ENCODE measurements at regions of chr20 and their contacts with region 1.

Region 1: DNA sequence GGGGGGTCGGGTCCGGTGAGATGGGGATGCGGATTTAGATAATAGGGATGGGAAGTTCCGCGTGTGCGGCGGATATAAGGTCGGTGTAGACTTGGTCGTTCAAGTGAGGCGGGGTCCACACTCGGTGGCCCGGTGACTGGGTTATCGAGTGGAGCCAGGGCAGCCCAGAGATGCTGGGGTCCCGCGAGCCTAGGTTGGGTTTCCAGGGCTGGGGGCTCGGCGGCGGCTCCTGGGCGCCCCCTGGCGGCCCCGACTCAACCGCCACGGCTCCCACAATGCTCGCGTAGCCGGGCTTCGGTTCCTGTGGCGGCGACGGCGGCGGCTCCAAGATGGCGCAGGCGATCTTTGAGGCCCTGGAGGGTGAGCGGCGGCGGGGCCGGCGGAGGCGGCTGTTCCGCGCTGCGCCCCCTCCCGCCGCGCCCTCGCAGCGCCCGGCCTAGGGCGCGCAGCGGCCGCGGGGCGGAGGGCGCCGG is at the start of gene ZNF341:
- DNase-seq: peak in 1 of 2 experiments; percentile 69
- H3K4me3 ChIP-seq: peak within 1 kb of the TSS; percentile 64
- H3K27ac ChIP-seq: peak within 1 kb of the TSS; percentile 94
- H3K4me1 ChIP-seq: peaks cover 59% of the 10 kb centered on the region
- H3K27me3 ChIP-seq: no peaks in the 10 kb centered on the region
- CTCF ChIP-seq: peak; percentile 83
- total RNA-seq, gene ZNF341: 5.2 and 5.6 TPM in 2 replicates

Region 2: GRCh38 chr20:33489495-33490022 is 242.2 kb before region 1 on chr20:
- CTCF ChIA-PET with region 1: no interaction called
- POLR2A ChIA-PET with region 1: interaction called, 12 read pairs
- intact Hi-C with region 1: no loop called
- DNase-seq: peak; percentile 91 to 100
- H3K4me3 ChIP-seq: peak overlapping the region; percentile 55; the same call in 1 of the 2 replicates
- H3K27ac ChIP-seq: peak overlapping the region; percentile 90
- H3K4me1 ChIP-seq: peaks cover 18% of the 10 kb centered on the region
- H3K27me3 ChIP-seq: no peaks in the 10 kb centered on the region
- CTCF ChIP-seq: no peak

Region 3: GRCh38 chr20:33770005-33770404 is 38.3 kb after region 1 on chr20:
- CTCF ChIA-PET with region 1: no interaction called
- POLR2A ChIA-PET with region 1: no interaction called
- intact Hi-C with region 1: no loop called
- DNase-seq: no peak
- H3K4me3 ChIP-seq: no peak overlapping the region
- H3K27ac ChIP-seq: no peak overlapping the region
- H3K4me1 ChIP-seq: no peaks in the 10 kb centered on the region
- H3K27me3 ChIP-seq: no peaks in the 10 kb centered on the region
- CTCF ChIP-seq: no peak

Region 4: GRCh38 chr20:33781133-33781532 is 49.4 kb after region 1 on chr20:
- CTCF ChIA-PET with region 1: no interaction called
- POLR2A ChIA-PET with region 1: interaction called, 5 read pairs
- intact Hi-C with region 1: loop called (anchors 1 kb)
- DNase-seq: no peak
- H3K4me3 ChIP-seq: no peak overlapping the region
- H3K27ac ChIP-seq: peak overlapping the region; percentile 98; the same call in 1 of the 2 replicates
- H3K4me1 ChIP-seq: peaks cover 48% of the 10 kb centered on the region
- H3K27me3 ChIP-seq: no peaks in the 10 kb centered on the region
- CTCF ChIP-seq: no peak

Region 5: GRCh38 chr20:33862709-33863403 is 131.1 kb after region 1 on chr20:
- CTCF ChIA-PET with region 1: no interaction called
- POLR2A ChIA-PET with region 1: no interaction called
- intact Hi-C with region 1: loop called (anchors 5 kb)
- DNase-seq: peak in 1 of 2 experiments; percentile 21
- H3K4me3 ChIP-seq: no peak overlapping the region
- H3K27ac ChIP-seq: no peak overlapping the region
- H3K4me1 ChIP-seq: peaks cover 22% of the 10 kb centered on the region
- H3K27me3 ChIP-seq: no peaks in the 10 kb centered on the region
- CTCF ChIP-seq: peak; percentile 58

Region 6: DNA sequence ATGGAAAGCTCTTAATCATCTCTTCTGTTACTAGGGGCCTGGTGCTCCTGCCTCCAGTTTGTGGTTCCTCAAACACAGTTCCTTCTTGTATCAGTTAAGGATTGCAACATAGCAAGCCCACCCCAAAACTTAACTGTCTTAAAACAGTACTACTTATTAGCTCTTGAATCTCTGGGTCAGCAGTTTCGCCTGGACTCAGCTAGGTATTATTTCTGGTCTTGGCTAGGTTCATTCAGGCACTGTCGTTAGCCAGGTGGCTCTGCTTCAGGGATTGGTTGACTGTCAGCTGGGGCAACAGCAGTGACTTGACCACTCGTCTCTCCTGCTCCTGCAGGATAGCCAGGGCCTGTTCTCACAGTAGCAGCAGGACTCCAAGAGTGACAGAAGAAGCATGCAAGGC is 232.0 kb after region 1 on chr20:
- CTCF ChIA-PET with region 1: no interaction called
- POLR2A ChIA-PET with region 1: no interaction called
- intact Hi-C with region 1: no loop called
- DNase-seq: no peak
- H3K4me3 ChIP-seq: no peak overlapping the region
- H3K27ac ChIP-seq: no peak overlapping the region
- H3K4me1 ChIP-seq: 0 out of 2 replicates have a peak, but pooled peaks cover 8% of the 10 kb centered on the region
- H3K27me3 ChIP-seq: no peaks in the 10 kb centered on the region
- CTCF ChIP-seq: no peak

Region 7: DNA sequence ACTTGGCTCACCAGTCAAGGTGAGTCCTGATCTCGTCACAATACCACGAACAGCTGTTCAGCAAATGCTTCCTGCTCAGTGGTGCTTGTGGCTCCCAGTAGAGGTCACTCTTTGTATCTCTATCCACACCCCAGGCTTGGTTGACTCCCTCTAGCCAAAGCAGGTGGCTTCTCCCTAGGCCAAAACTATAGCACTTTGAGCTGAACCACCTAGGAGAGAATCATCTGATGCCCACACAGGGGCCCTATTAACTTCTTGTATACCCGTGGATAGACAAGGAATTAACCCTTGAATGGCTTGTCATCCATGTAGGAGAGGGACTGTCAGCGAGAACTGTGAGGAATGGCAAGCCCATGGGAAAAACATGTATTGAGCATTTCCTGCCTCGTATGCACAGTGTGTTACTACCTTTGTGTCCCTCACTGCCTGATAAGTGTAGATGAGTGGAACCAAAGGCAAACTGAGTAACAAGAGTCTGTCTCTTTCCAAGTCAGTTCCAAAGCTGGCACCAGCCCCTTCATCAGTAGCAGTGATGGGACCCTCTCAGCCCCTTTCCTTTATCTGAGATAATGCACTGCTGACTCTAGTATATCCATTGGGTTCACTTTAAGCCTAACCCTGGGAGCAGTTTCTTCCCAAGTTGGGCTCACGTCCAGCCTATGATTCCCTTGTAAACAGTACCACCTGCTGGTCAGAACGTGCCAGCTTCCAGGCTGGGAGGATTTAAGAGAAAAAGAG is 337.8 kb after region 1 on chr20:
- CTCF ChIA-PET with region 1: interaction called, 3 read pairs
- POLR2A ChIA-PET with region 1: no interaction called
- intact Hi-C with region 1: loop called (anchors 5 kb)
- DNase-seq: peak; percentile 70 to 75
- H3K4me3 ChIP-seq: no peak overlapping the region
- H3K27ac ChIP-seq: 0 out of 2 replicates have a peak overlapping the region, but pooled peaks have one; percentile 33
- H3K4me1 ChIP-seq: peaks cover 13% of the 10 kb centered on the region; the same call in 1 of the 2 replicates
- H3K27me3 ChIP-seq: no peaks in the 10 kb centered on the region
- CTCF ChIP-seq: peak; percentile 89

Region 8: DNA sequence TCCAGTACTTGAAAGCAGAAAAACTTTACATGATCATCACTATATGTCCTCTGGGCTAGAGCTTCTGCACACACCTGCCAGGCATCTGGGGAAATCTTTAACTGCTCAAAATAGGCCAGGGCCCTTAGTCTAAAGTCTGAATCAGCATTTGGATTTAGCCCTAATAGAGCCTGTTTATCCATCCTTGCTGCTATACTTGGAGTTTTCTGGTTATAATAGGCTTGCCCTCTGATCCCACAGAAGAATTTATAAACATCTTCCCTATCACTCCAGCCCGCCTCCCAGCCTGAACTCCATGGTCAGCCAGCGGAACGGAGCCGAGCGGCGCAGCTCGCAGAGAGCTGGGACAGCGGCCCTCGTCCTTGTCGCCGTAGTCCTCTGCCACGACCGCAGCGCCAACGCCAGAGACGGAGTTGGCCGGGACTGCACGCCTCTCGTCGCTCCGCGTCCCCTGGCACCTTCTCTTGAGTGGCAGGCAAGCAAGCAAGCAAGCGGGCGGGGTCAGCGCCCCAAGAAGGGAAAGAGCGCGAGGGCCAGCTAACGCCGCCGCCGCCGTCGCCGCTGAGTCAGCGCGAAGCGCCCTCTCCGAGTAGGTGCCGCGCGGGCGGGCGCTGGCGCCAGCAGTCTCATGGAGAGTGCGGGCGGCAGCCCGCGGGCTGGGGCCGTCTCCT is 484.1 kb after region 1 on chr20:
- CTCF ChIA-PET with region 1: no interaction called
- POLR2A ChIA-PET with region 1: no interaction called
- intact Hi-C with region 1: no loop called
- DNase-seq: peak; percentile 52 to 90
- H3K4me3 ChIP-seq: peak overlapping the region; percentile 43; the same call in 1 of the 2 replicates
- H3K27ac ChIP-seq: no peak overlapping the region
- H3K4me1 ChIP-seq: 0 out of 2 replicates have a peak, but pooled peaks cover 6% of the 10 kb centered on the region
- H3K27me3 ChIP-seq: peaks cover 3% of the 10 kb centered on the region; the same call in 1 of the 2 replicates
- CTCF ChIP-seq: no peak